Ascending aorta (tissue), 2 donors: ENCODE measurements at regions of chr12 and their contacts with region 1.

Region 1: DNA sequence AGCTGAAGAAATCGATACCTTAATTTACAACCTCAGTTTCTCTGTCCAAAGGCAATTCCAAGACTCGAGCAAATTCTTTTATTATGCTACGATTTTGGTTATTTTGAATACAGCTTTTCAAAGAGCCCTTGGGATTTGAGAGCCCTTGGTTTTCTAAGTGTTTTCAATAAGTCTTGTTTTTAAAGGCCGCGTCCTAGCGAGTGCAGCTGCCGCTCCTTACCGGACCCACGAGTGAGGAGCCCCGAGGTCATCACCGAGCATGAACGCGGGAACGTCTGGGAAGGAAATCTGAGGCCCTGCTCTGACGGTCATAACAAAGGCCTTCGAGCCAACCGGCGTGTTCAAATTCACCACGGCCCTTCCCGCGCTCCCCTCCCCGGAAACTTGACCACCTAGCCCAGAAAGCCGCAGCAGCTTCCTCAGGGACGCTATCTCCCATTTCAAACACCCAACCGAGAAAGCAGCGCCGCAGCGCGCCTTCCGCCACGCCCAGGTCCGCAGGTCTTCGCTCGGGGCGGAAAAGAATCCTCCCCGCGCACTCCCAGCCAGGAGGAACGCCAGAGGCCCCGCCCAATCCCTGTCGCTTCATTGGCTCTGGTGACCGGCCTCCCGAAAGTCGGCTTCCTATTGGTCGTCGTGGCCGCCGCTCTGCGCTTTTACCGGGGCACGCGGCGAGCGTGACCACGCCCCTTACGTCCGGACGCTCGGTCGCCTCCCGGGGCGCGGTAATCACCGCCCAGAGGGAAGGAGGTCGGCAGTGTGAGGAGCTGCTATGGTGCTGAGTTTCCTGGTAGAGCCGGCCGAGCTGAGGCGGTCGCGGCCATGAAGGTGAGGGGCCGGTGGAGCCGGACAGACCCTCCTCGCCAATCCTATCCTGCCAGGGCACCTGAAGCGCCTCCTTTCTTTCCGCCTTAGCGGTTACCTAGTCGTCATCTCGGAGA is at the start of gene RNF34:
- DNase-seq: peak; percentile 93 to 99
- H3K4me3 ChIP-seq: peak within 1 kb of the TSS; percentile 95 to 99
- H3K27ac ChIP-seq: peak within 1 kb of the TSS; percentile 90 to 97
- H3K4me1 ChIP-seq: peaks cover 0 to 20% of the 10 kb centered on the region in 2 donors
- H3K27me3 ChIP-seq: no peaks in the 10 kb centered on the region
- CTCF ChIP-seq: no peak
- total RNA-seq, gene RNF34: 45.1 TPM

Region 2: GRCh38 chr12:121248622-121249021 is 151.0 kb before region 1 on chr12:
- intact Hi-C with region 1: no loop called
- DNase-seq: no peak
- H3K4me3 ChIP-seq: no peak overlapping the region
- H3K27ac ChIP-seq: no peak overlapping the region
- H3K4me1 ChIP-seq: no peaks in the 10 kb centered on the region
- H3K27me3 ChIP-seq: no peaks in the 10 kb centered on the region
- CTCF ChIP-seq: no peak

Region 3: DNA sequence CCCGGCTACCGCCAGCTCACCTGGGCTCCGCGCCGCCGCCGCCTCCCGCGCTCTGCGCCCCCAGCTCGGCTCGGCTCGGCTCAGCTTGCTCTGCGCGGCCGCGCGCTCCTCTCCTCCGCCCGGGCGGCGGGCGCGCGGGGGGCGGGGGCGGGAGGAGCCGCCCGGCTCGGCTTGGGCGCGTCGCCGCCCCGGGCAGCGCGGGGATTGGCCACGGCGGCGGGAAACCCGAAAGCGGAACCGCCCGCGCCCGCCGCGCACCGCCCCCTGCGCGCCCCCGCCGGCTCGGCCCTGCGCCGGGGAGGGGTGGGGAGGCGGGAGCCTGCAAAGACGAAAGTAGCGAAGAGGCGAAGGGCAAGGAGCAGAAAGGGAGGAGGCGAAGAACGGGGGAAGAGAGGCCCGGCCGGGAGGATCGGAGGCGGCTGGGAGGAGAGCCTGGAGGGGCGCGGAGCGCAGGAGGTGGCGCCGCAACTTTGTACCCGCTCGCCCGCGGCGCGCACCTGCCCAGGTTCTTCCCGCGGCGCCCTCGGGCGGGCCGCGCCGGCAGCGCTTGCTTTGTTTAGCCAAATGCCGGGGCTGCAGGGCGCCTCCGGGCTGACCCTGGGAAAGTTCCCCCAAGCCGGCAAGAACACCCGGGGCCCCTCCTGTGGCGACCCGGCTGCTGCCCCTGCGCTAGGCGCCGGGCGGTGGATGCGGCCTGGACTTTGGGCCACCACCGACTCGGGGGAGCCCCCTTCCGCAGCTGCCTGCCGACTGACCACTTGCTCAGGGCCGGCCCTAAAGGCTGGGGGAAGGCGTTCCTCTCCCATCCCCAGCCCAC is 102.8 kb before region 1 on chr12 and contains the start of gene CAMKK2:
- intact Hi-C with region 1: loop called (anchors 1 kb)
- DNase-seq: peak; percentile 39 to 91
- H3K4me3 ChIP-seq: peak within 1 kb of the TSS; percentile 89 to 99
- H3K27ac ChIP-seq: peak within 1 kb of the TSS; percentile 65 to 83
- H3K4me1 ChIP-seq: peaks cover 0 to 18% of the 10 kb centered on the region in 2 donors
- H3K27me3 ChIP-seq: no peaks in the 10 kb centered on the region
- CTCF ChIP-seq: peak in 1 of 3 experiments; percentile 35
- total RNA-seq, gene CAMKK2: 36.9 TPM

Region 4: DNA sequence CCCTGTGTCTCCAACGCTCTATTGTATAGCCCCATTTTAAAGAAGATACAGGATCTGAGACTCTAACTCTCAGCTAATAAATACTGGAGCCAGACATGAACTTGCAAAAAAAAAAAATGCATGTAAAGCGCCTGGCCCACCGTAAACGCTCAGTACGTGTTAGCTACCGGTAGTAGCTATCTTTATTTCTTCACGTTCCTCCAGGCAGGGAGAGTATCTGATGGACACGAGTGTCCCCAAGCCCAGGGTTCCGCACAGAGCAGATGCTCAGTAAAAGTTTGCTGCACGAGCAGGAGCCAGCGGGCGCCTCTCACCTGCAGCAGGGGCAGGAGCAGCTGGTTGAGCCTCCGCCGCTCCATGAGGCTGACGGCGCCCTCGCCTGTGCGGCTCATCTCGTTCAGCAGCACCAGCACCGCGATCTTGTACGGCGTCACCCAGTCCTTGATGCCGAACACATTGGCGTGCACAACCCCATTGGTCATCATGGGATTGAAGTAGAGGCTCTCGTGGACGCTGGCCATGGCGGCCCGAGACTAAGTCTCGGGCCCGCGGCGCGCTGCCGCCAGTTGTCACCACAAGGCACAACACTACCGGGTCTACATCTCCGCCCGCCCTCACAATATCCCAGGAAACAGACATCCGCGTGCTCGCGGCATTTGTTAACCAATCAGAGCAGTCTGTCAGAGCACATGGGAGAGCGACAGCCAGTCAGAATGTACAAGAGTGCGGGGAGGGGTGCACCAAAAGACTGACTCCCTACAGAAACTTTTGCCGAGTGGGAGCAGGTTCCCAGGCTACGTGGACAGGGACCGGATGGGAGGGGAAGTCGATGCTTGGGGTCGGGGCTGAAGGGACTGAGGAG is 47.6 kb before region 1 on chr12 and contains the start of gene ANAPC5:
- intact Hi-C with region 1: loop called (anchors 1 kb)
- DNase-seq: peak; percentile 94 to 99
- H3K4me3 ChIP-seq: peak within 1 kb of the TSS; percentile 93 to 97
- H3K27ac ChIP-seq: peak within 1 kb of the TSS; percentile 81 to 84
- H3K4me1 ChIP-seq: peaks cover 6 to 14% of the 10 kb centered on the region in 2 donors
- H3K27me3 ChIP-seq: no peaks in the 10 kb centered on the region
- CTCF ChIP-seq: peak in 1 of 3 experiments; percentile 12
- total RNA-seq, gene ANAPC5: 58.8 TPM

Region 5: DNA sequence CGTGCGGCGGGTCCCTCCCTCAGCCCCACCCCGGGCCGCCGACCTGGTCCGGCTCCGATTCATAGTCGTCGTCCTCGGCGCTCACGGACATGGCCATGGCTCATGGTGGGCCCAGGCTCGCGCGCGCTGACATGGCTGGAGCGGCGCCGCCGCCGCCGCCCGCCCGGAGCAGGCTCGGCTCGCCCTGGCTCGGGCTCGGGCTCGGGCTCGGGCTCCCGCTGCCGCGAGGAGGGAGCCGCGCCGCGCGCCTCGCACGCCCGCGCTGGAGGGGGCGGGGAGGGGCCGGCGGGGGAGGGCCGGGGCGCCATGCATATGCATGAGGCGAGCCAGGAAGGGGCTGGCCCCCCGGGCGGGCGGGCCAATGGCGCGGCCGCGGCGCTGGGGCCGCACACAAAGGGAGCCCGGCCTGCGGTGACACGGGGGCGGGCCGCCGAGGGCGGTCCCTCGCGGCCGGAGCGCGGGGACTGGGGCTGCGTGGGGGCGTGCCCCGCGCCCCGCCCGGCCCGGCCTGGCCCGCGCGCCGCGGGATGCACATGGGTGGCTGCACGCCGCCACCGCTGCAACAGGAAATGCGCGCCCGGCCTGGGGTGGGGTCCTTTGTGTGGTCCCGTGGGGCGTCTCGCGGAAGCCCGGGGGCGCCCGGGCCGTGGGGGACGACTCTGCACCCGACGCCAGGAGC is 67.6 kb after region 1 on chr12:
- intact Hi-C with region 1: loop called (anchors 2 kb)
- DNase-seq: peak; percentile 73 to 94
- H3K4me3 ChIP-seq: peak overlapping the region; percentile 84 to 97
- H3K27ac ChIP-seq: peak overlapping the region; percentile 69 to 92
- H3K4me1 ChIP-seq: peaks cover 0 to 5% of the 10 kb centered on the region in 2 donors
- H3K27me3 ChIP-seq: no peaks in the 10 kb centered on the region
- CTCF ChIP-seq: no peak